Dendritic cell treated with granulocyte-macrophage colony-stimulating factor and Interleukin-4, amounts not matched to agents 40 ng/mL and 50 ng/mL, for 4 days (primary cell): ENCODE measurements at regions of chr9 and their contacts with region 1.

Region 1: DNA sequence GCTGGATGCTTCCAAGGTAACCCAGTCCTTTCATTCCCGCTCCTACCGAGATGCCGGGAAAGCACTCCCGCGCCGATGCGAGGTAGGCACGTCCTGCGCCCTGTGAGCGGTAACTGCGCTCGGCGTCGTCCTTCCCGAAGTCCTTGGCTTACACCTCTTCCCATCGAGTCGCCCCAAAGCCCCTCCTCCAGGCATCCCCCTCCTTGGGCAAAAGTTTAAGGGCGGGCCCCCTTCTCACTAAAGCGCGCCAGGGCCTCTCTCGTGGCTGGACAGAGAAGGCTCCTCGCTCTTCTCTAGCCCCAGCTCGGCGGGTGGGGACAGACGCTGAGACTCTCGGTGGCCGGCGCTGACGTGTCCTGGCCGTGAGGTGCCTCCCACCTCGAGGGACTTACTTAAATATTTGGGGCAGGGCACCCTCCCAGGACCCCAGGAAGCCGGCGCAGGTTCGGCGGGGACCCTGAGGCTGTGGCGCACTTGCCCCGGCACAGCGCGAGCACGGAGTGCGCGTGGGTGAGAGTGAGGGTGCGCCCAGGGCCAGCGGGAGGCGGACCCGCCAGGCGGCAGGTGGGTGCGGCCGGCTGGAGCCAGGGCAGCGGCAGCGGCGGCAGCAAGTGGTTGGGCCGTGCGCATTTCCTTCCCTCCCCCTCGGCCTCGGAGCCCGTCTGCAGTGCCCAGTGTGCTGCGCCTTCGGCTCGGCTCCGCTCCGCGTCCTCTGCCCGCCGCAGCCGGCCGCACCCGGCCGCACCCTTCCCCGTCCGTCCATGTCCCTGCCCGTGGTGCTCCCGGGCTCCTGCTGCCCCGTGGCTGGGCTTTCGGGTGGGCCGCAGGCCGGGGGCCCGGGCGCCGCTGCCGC is at the start of gene ENTREP1:
- H3K4me3 Mint-ChIP-seq: peak within 1 kb of the TSS; percentile 74
- H3K27ac Mint-ChIP-seq: peak within 1 kb of the TSS; percentile 52
- H3K4me1 Mint-ChIP-seq: peaks cover 17% of the 10 kb centered on the region
- H3K27me3 Mint-ChIP-seq: peaks cover 69% of the 10 kb centered on the region

Region 2: GRCh38 chr9:69376651-69377050 is 51.9 kb after region 1 on chr9:
- intact Hi-C with region 1: loop called (anchors 10 kb)
- H3K4me3 Mint-ChIP-seq: no peak overlapping the region
- H3K27ac Mint-ChIP-seq: no peak overlapping the region
- H3K4me1 Mint-ChIP-seq: peaks cover 6% of the 10 kb centered on the region
- H3K27me3 Mint-ChIP-seq: no peaks in the 10 kb centered on the region